CD14-positive monocyte (primary cell): ENCODE measurements at regions of chr15 and their contacts with region 1.

Region 1: DNA sequence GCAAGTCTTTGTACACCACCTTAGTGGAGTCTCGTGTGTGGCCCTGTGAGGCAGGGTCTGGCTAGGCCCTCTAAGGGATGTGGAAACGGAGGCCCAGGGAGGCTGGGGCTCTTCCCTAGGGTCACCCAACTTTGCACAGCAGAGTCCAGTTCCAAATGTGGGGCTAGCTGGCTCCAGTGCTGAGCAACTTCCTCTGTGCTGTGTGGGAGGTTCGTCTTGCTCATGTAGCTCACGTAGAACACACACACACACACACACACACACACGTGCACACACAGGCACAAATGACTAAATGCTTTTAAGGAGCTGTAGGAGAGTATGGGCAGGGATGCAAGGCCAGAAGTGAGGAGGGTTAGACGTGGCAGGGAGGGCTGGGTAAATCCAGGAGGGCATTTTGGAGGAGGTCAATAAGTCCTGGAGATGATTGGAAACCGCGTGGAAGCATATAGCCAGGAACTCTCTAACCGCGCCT is 213.8 kb downstream of the RPLP1 start:
- DNase-seq: peak; percentile 86 to 91 (median 89)
- H3K4me3 ChIP-seq: peak overlapping the region in 1 of 3 experiments; percentile 56
- H3K4me3 Mint-ChIP-seq: peak overlapping the region; percentile 59 to 86
- H3K27ac ChIP-seq: peak overlapping the region; percentile 97 to 99
- H3K27ac Mint-ChIP-seq: peak overlapping the region; percentile 97 to 100 (median 99)
- H3K4me1 ChIP-seq: peaks cover 65 to 71% of the 10 kb centered on the region in 2 donors
- H3K4me1 Mint-ChIP-seq: peaks cover 65% of the 10 kb centered on the region
- H3K27me3 ChIP-seq: no peaks in the 10 kb centered on the region
- H3K27me3 Mint-ChIP-seq: peaks cover 2 to 4% (median 4%) of the 10 kb centered on the region in 3 donors
- CTCF ChIP-seq: no peak

Region 2: DNA sequence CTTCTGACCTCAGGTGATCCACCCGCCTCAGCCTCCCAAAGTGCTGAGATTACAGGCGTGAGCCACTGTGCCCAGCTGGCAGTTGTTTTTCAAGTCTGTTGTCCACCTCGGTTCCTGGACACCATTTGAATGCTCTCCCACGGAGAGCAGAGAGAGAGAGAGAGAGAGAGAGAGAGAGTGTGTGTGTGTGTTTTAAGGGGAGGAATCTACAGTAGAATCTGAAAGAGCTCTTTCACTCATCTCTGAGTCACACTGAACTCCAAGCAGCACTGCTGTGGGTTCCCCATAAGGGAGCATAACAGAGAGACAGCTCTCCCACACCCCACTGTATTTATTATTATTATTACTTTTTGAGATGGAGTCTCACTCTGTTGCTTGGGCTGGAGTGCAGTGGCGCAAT is 57.3 kb before region 1 on chr15:
- intact Hi-C with region 1: loop called in 1 of 2 experiments (anchors 2 kb)
- DNase-seq: peak; percentile 72 to 84 (median 78)
- H3K4me3 ChIP-seq: no peak overlapping the region
- H3K4me3 Mint-ChIP-seq: peak overlapping the region in 1 of 2 donors; percentile 7
- H3K27ac ChIP-seq: peak overlapping the region; percentile 54 to 93
- H3K27ac Mint-ChIP-seq: peak overlapping the region; percentile 97 to 99 (median 98)
- H3K4me1 ChIP-seq: peaks cover 79 to 90% of the 10 kb centered on the region in 2 donors
- H3K4me1 Mint-ChIP-seq: peaks cover 77% of the 10 kb centered on the region
- H3K27me3 ChIP-seq: no peaks in the 10 kb centered on the region
- H3K27me3 Mint-ChIP-seq: peaks cover 0 to 7% (median 5%) of the 10 kb centered on the region in 3 donors
- CTCF ChIP-seq: no peak